Sigmoid colon (tissue), 7 donors: ENCODE measurements at regions of chr7 and their contacts with region 1.

Region 1: GRCh38 chr7:92245487-92246362 is at the starts of genes ANKIB1 and KRIT1:
- DNase-seq: peak; percentile 93
- H3K4me3 ChIP-seq: peak within 1 kb of the TSS; percentile 71 to 99 (median 95)
- H3K27ac ChIP-seq: peak within 1 kb of the TSS; percentile 81 to 95 (median 89)
- H3K4me1 ChIP-seq: peaks cover 0 to 43% (median 27%) of the 10 kb centered on the region in 4 donors
- H3K27me3 ChIP-seq: no peaks in the 10 kb centered on the region
- CTCF ChIP-seq: peak in 2 of 4 experiments; percentile 21 to 24
- EP300 ChIP-seq: no peak
- POLR2A ChIP-seq: peak; percentile 21 to 62
- total RNA-seq, gene ANKIB1: 24.6 to 37.5 (median 33.3) TPM
- total RNA-seq, gene KRIT1: 69.1 to 97.2 (median 75.8) TPM

Region 2: DNA sequence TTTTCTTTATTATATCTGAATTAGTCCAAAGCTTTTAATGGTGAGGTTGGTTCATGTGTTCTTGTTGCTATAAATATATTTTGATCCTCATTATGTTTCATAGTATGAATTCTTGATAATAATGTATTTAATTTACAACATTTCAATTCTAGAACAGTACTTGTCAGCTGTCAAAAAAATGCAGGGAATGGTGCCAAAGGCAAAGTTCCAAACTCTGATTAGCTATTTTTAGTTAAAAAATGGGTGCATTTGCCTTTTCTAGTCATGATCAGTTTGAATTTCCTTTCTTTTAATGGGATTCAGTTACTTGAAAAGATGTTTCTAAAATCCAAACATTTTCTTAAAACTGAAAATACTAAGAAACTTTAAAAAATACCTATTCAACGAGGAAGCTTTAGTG is 49.7 kb after region 1 on chr7:
- intact Hi-C with region 1: loop called (anchors 5 kb)
- DNase-seq: no peak
- H3K4me3 ChIP-seq: no peak overlapping the region
- H3K27ac ChIP-seq: no peak overlapping the region
- H3K4me1 ChIP-seq: peaks cover 0 to 25% (median 15%) of the 10 kb centered on the region in 4 donors
- H3K27me3 ChIP-seq: no peaks in the 10 kb centered on the region
- CTCF ChIP-seq: no peak
- EP300 ChIP-seq: no peak
- POLR2A ChIP-seq: no peak

Region 3: DNA sequence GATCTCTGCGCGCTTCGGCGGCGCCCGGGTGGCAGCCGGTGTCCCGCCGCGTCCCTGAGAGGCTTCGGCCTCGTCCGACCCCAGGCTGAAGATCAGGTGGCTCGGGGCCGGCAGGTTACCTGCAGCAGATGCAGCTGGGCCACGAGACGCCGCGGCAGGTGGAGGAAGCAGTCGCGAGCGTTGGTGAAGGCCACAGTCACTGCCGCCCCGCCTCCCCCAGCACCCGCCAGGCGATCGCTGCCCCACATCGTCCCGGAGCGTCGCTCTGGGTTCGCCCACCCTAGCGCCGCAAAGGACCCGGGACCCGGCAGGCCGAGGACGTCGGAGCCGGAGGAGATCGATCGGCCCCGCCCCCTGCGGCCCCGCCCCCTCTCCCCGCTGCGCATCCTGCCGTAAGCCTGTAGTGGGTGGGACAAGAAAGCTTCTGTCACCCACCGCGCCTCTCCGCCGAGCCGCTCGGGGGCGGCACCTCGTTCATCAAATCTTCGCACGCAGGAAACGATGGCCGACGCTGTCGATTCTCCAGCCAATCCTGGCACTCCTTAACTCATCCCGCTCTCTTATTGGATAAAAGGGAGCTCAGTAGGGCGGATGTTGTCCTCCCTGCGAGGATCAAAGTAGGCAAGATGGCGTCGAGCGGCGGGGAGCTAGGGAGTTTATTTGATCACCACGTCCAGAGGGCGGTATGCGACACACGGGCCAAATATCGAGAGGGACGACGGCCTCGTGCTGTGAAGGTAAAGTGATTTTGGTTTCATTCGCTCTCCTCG is 282.6 kb after region 1 on chr7 and contains the starts of genes PEX1 and RBM48:
- intact Hi-C with region 1: loop called (anchors 5 kb)
- DNase-seq: peak; percentile 98
- H3K4me3 ChIP-seq: peak within 1 kb of the TSS; percentile 83 to 97 (median 95)
- H3K27ac ChIP-seq: peak within 1 kb of the TSS; percentile 86 to 90 (median 88)
- H3K4me1 ChIP-seq: peaks cover 0 to 22% (median 20%) of the 10 kb centered on the region in 4 donors
- H3K27me3 ChIP-seq: no peaks in the 10 kb centered on the region
- CTCF ChIP-seq: peak in 1 of 4 experiments; percentile 19
- EP300 ChIP-seq: no peak
- POLR2A ChIP-seq: no peak
- total RNA-seq, gene PEX1: 19.0 to 29.0 (median 24.4) TPM
- total RNA-seq, gene RBM48: 6.7 to 20.4 (median 14.5) TPM